ENCODE measurements at regions of chr2 and their contacts with region 1.

Region 1: DNA sequence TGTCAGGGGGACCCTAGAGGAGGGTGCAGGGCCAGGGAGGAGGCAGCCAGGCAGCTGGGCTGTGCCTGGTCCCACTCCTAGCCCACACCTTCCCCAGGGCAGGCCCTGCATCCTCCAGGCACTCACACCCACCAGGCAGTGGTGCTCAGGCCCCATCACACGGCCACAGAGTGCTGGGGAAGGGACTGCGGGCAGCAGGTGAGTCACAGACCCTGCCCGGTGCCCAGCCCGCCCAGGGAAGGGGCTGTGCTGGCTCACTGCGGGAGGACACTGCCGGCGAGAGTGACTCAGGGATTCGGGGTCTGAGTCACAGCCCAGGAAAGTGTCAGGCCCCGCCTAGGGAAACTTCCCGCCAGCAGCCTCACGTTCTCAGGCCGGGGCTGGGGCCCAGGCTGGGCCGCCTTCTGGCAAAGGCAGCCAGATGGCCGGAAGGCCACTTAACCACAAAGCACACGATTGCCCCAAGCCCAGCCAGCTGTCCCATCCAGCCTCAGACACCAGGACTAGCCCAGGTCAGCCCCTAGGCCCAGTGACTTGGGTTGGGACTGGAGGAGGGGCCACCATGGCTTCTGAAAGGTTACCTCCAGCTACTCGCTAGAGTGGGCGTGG is 42.2 kb downstream of the BIN1 start:
- DNase-seq: peak; percentile 99
- H3K4me3 ChIP-seq: no peak overlapping the region
- H3K27ac ChIP-seq: peak overlapping the region; percentile 73
- H3K4me1 ChIP-seq: peaks cover 32% of the 10 kb centered on the region
- H3K27me3 ChIP-seq: no peaks in the 10 kb centered on the region
- CTCF ChIP-seq: peak; percentile 54; the same call in 1 of the 2 replicates

Region 2: DNA sequence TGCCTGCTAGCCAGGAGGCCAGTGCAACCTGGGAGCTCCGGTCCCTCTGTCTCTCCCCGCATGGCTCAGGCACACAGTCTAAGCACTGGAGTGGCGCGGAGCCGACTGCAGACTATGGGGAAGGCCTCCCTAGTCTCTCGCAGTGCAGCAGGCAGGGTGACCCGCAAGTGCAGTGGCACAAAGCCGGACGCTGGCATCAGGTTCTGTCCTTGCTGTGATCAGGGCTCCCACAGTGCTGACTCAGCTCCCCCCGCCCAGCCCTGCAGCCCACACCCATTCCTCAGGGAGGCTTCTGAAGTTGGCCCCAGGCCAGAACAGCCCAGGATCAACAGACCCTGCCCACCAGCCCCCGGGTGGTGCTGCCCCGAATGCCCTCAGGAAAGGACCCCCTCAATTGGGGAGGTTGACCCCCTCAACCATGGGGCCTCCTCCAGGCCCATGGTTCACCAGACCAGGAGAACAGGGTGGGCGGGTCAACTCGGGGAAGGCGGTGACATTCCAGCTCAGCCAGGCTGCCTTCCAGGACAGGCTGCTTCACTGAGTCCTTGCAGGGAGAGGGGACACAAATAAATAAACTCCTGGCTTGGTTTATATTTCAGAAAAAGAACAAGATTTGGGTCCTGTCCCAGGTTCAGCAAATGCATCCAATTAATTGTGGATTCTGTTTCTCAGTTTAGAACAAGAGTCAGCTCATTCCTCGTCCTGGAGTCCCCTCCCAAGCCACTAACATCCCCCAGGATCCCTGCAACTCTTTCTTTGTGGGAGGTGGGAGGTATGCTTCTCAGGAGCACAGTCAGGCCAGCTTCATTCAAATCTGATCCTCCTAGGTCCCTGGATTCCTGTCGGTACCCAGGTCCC is 30.0 kb after region 1 on chr2:
- CTCF ChIA-PET with region 1: interaction called, 3 read pairs
- POLR2A ChIA-PET with region 1: no interaction called
- intact Hi-C with region 1: loop called (anchors 2 kb)
- DNase-seq: peak; percentile 71 to 88
- H3K4me3 ChIP-seq: peak overlapping the region; percentile 5; the same call in 1 of the 2 replicates
- H3K27ac ChIP-seq: peak overlapping the region; percentile 51
- H3K4me1 ChIP-seq: peaks cover 43% of the 10 kb centered on the region
- H3K27me3 ChIP-seq: no peaks in the 10 kb centered on the region
- CTCF ChIP-seq: no peak

Region 3: DNA sequence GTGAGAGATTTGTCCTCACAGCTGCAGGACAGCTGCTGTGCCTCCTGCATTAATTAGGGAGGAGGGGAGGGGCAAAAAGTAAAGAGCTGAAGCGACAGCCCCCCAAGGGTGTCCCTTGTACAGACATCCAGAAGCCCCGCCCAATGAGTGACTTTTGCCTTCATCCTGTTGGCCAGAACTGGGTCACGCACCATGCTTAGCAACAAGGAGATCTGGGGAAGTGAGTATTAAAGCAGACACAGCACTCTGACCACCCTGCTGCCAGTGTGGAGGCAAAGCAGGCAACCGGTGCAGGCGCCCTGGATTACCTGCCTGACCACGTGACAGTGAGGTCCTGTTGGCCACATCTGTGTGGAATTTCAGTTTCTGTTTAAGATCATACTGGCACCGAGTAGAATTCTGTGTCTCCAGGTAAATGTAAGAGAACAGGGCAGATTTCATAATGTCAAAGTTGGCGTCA is 63.7 kb after region 1 on chr2:
- CTCF ChIA-PET with region 1: no interaction called
- POLR2A ChIA-PET with region 1: interaction called, 6 read pairs
- intact Hi-C with region 1: loop called (anchors 1 kb)
- DNase-seq: peak in 1 of 2 experiments; percentile 86
- H3K4me3 ChIP-seq: no peak overlapping the region
- H3K27ac ChIP-seq: no peak overlapping the region
- H3K4me1 ChIP-seq: 0 out of 2 replicates have a peak, but pooled peaks cover 5% of the 10 kb centered on the region
- H3K27me3 ChIP-seq: no peaks in the 10 kb centered on the region
- CTCF ChIP-seq: no peak

Region 4: DNA sequence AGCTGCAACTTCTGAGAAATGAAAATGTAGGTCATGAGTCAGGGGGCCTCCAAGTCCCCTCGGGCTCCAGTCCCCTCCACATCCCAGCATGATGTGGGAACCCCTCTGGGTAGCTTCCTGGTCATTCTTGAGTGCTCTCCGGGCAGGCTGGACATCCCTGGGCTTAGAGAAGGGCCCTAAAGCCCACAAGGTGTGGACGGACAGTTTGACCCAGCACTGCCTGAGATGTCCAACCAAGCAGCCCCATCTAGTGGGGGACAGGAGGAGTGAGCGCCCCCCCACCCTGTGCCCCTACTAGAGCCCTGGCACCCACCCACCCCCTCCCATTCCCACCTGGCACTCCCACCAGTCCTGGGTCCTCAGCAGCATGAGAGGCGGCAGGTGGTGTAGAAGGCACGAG is 109.4 kb after region 1 on chr2:
- CTCF ChIA-PET with region 1: interaction called, 4 read pairs
- POLR2A ChIA-PET with region 1: no interaction called
- intact Hi-C with region 1: loop called (anchors 1 kb)
- DNase-seq: peak; percentile 47 to 48
- H3K4me3 ChIP-seq: no peak overlapping the region
- H3K27ac ChIP-seq: no peak overlapping the region
- H3K4me1 ChIP-seq: peaks cover 24% of the 10 kb centered on the region
- H3K27me3 ChIP-seq: no peaks in the 10 kb centered on the region
- CTCF ChIP-seq: peak; percentile 70

Region 5: GRCh38 chr2:127293748-127294562 is 229.2 kb after region 1 on chr2 and contains the start of gene ERCC3:
- CTCF ChIA-PET with region 1: no interaction called
- POLR2A ChIA-PET with region 1: no interaction called
- intact Hi-C with region 1: loop called (anchors 5 kb)
- DNase-seq: peak; percentile 72 to 79
- H3K4me3 ChIP-seq: peak within 1 kb of the TSS; percentile 72
- H3K27ac ChIP-seq: peak within 1 kb of the TSS; percentile 68
- H3K4me1 ChIP-seq: peaks cover 16% of the 10 kb centered on the region
- H3K27me3 ChIP-seq: no peaks in the 10 kb centered on the region
- CTCF ChIP-seq: 0 out of 2 replicates have a peak, but pooled peaks have one; percentile 34
- total RNA-seq, gene ERCC3: 70.3 and 73.2 TPM in 2 replicates

Region 6: DNA sequence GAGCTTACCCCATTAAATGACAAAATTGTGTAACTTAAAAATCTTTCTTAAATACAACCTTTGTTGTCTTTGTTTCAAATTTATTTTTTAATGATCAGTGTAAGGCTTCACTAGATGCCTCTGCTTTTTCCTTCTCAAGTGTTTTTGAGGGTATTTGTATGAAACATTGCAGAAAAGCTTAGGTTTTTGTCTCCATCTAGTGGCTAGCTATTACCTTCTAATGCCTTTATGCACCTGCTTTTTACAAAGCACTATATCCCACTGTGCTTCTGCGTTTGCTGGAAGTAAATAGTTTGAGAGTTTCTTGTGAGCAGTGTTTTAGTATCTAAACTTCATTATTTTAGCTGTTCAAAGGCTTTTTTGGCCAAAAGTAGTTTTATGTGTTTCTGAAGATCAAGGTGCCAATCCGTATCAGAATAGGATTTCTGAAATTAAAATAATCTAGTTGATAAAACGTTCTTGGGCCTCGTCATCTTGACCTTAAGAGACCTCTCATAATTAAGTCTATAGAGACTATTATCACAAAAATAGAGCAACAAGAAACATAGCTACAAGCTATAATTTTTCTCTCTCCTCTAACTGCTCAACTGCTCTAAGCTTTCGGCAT is 414.6 kb after region 1 on chr2:
- CTCF ChIA-PET with region 1: interaction called, 3 read pairs
- POLR2A ChIA-PET with region 1: no interaction called
- intact Hi-C with region 1: loop called (anchors 5 kb)
- DNase-seq: peak in 1 of 2 experiments; percentile 55
- H3K4me3 ChIP-seq: no peak overlapping the region
- H3K27ac ChIP-seq: no peak overlapping the region
- H3K4me1 ChIP-seq: no peaks in the 10 kb centered on the region
- H3K27me3 ChIP-seq: no peaks in the 10 kb centered on the region
- CTCF ChIP-seq: peak; percentile 91

Region 7: GRCh38 chr2:127664065-127664894 is 599.5 kb after region 1 on chr2:
- CTCF ChIA-PET with region 1: no interaction called
- POLR2A ChIA-PET with region 1: no interaction called
- intact Hi-C with region 1: no loop called
- DNase-seq: no peak
- H3K4me3 ChIP-seq: no peak overlapping the region
- H3K27ac ChIP-seq: no peak overlapping the region
- H3K4me1 ChIP-seq: no peaks in the 10 kb centered on the region
- H3K27me3 ChIP-seq: peaks cover 45% of the 10 kb centered on the region
- CTCF ChIP-seq: no peak